Sigmoid colon (tissue), 7 donors: ENCODE measurements at regions of chr15 and their contacts with region 1.

Region 1: GRCh38 chr15:83207622-83208411 is at the start of gene HDGFL3:
- DNase-seq: peak; percentile 81
- H3K4me3 ChIP-seq: peak within 1 kb of the TSS; percentile 82 to 96 (median 93)
- H3K27ac ChIP-seq: peak within 1 kb of the TSS; percentile 93 to 98 (median 96)
- H3K4me1 ChIP-seq: peaks cover 0 to 43% (median 31%) of the 10 kb centered on the region in 4 donors
- H3K27me3 ChIP-seq: no peaks in the 10 kb centered on the region
- CTCF ChIP-seq: no peak
- EP300 ChIP-seq: no peak
- POLR2A ChIP-seq: no peak
- total RNA-seq, gene HDGFL3: 58.0 to 83.6 (median 66.9) TPM

Region 2: DNA sequence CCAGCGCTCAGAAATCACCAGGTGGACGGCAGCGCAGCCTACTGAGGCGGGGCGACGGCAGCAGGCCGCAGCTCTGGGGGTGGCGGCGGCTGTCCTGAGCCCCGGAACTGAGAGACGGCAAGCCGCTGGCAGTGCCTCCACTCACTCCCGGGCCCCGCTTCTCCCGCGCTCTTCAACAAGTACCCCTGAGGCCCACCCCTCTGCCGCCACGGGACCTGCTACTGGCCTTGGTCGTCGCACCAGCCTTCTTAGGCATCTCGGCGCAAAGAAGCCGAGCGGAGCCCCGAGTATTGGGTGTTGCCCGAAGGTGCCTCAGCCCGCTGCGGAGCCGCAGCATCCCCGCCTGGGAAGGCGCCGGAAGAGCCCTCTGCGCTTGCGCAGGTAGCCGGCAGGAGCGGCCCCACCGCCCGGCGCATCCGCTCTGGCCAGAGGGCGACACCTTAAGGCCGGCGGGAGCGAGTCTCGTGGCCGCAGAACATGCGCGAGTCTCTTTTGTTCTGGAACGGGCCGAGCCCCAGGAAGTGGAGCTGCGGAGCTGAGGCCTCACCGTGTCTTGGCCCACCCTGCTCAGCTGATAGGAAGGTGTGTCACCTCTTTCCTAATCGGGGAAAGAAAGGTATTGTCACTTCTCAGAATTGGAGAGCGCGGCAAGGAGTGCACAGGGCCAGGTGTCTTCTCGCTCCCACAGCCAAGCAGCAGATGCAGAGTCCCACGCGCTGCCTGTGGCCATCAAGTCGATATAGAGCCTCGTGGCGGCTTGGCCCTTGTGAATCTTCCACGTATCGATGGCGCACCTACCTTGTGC is 196.3 kb before region 1 on chr15 and contains the start of gene C15orf40:
- intact Hi-C with region 1: loop called (anchors 5 kb)
- DNase-seq: peak; percentile 95
- H3K4me3 ChIP-seq: peak within 1 kb of the TSS; percentile 79 to 97 (median 87)
- H3K27ac ChIP-seq: peak within 1 kb of the TSS; percentile 84 to 88 (median 84)
- H3K4me1 ChIP-seq: peaks cover 0 to 34% (median 18%) of the 10 kb centered on the region in 4 donors
- H3K27me3 ChIP-seq: no peaks in the 10 kb centered on the region
- CTCF ChIP-seq: peak; percentile 51 to 54 (median 52)
- EP300 ChIP-seq: no peak
- POLR2A ChIP-seq: peak; percentile 61 to 67
- total RNA-seq, gene C15orf40: 9.1 to 14.6 (median 12.0) TPM